CD4-positive, alpha-beta T cell (primary cell): ENCODE measurements at regions of chr17 and their contacts with region 1.

Region 1: DNA sequence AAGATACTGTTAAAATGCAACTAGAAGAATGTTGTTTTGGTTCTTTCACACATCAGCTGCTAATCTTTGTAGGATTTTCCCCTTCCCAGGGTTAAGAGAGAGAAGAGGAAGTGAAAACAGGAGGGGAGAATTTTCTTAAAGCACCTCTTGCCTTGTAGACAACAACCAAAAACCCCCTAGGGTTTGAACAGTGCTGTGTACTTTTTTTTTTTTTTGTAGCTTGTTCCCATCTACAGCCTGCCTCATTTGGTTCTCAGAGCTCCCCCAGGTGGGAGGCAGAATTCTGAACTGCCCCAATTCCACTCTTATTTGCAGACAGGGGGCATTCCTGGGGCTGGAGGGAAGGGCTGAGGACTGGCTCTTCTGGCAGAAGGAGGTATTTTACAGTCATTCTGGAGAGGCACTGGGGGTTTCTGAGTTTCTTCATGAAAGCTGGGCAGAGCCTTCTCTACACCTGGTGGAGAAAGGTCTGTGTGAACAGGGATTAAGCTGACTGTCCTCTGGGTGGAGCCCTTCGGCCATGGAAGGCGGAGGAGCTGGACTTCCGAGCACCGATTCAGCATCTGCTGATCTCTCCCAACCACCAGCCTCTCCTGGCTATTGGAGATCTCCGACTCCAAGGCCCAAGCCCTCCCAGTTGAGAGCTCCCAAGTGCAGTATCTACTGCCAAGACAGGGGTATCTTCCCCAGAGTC is 32.2 kb downstream of the SMARCE1 start:
- DNase-seq: peak in 9 of 14 experiments; percentile 44 to 89 (median 55)
- ATAC-seq: peak; percentile 35
- H3K4me3 ChIP-seq: no peak overlapping the region
- H3K4me3 Mint-ChIP-seq: peak overlapping the region; percentile 75
- H3K27ac ChIP-seq: peak overlapping the region; percentile 96 to 99
- H3K27ac Mint-ChIP-seq: peak overlapping the region; percentile 98
- H3K4me1 ChIP-seq: peaks cover 83% of the 10 kb centered on the region
- H3K4me1 Mint-ChIP-seq: peaks cover 72% of the 10 kb centered on the region
- H3K27me3 ChIP-seq: no peaks in the 10 kb centered on the region
- H3K27me3 Mint-ChIP-seq: no peaks in the 10 kb centered on the region
- CTCF ChIP-seq: peak; percentile 67

Region 2: GRCh38 chr17:40362696-40363110 is 252.7 kb before region 1 on chr17:
- CTCF ChIA-PET with region 1: interaction called, 5 read pairs
- POLR2A ChIA-PET with region 1: no interaction called
- intact Hi-C with region 1: loop called in 1 of 2 experiments (anchors 5 kb)
- DNase-seq: peak; percentile 68 to 87 (median 74)
- ATAC-seq: peak; percentile 82
- H3K4me3 ChIP-seq: peak overlapping the region; percentile 36
- H3K4me3 Mint-ChIP-seq: peak overlapping the region; percentile 14
- H3K27ac ChIP-seq: no peak overlapping the region
- H3K27ac Mint-ChIP-seq: no peak overlapping the region
- H3K4me1 ChIP-seq: peaks cover 23% of the 10 kb centered on the region
- H3K4me1 Mint-ChIP-seq: peaks cover 16% of the 10 kb centered on the region
- H3K27me3 ChIP-seq: peaks cover 0 to 13% of the 10 kb centered on the region in 2 experiments
- H3K27me3 Mint-ChIP-seq: peaks cover 17% of the 10 kb centered on the region
- CTCF ChIP-seq: peak; percentile 56

Region 3: GRCh38 chr17:40443583-40444327 is 171.7 kb before region 1 on chr17:
- CTCF ChIA-PET with region 1: no interaction called
- POLR2A ChIA-PET with region 1: interaction called, 3 read pairs
- intact Hi-C with region 1: loop called in 1 of 2 experiments (anchors 5 kb)
- DNase-seq: peak; percentile 41 to 84 (median 66)
- ATAC-seq: peak; percentile 76
- H3K4me3 ChIP-seq: peak overlapping the region; percentile 62
- H3K4me3 Mint-ChIP-seq: peak overlapping the region; percentile 89
- H3K27ac ChIP-seq: no peak overlapping the region
- H3K27ac Mint-ChIP-seq: peak overlapping the region; percentile 85
- H3K4me1 ChIP-seq: peaks cover 46% of the 10 kb centered on the region
- H3K4me1 Mint-ChIP-seq: peaks cover 37% of the 10 kb centered on the region
- H3K27me3 ChIP-seq: no peaks in the 10 kb centered on the region
- H3K27me3 Mint-ChIP-seq: peaks cover 6% of the 10 kb centered on the region
- CTCF ChIP-seq: peak; percentile 63

Region 4: DNA sequence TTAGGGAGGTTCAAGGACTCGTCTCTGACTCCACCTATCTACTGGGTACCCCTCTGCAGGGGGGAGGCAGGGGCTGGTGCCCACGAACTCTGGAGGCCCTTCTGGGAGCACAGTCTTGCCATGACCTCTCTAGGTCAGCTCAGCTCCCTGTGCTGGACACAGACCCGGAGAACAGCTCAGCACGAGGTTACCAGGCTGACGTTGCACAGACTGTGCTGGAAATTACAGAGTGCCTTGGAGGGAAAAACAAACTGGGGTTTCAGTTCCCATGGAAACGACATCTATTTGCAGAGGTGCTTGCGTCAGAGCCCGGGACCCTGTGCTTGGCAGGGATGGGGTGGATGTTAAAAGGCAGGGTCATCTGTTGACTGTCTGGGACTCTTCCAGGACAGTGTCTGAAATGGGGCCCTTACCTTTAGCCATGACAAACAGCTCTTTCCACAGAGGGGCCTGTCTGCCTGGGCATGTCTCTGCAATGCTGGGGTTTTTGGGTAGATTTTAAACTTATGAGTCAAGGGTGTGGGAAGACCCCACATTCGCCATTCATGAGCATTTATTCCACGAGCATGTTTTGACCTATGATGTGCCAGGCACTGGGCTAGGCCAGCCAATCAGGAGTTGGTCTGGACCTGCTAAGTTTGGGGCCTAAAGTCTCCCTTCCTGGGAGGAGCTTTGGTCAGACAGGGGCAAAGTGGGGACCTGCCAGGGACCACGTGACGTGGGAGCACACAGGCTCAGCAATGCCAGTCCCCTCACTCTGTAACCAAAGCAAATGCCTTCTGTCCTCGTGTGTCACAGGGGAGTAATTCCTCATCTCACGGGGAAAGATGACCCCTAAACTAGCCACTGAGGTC is 72.7 kb before region 1 on chr17:
- CTCF ChIA-PET with region 1: interaction called, 17 read pairs
- POLR2A ChIA-PET with region 1: interaction called, 1,290 read pairs
- intact Hi-C with region 1: loop called in 1 of 2 experiments (anchors 2 kb)
- DNase-seq: peak in 5 of 14 experiments; percentile 32 to 80 (median 45)
- ATAC-seq: no peak
- H3K4me3 ChIP-seq: no peak overlapping the region
- H3K4me3 Mint-ChIP-seq: peak overlapping the region; percentile 72
- H3K27ac ChIP-seq: peak overlapping the region in 1 of 2 donors; percentile 79
- H3K27ac Mint-ChIP-seq: peak overlapping the region; percentile 94
- H3K4me1 ChIP-seq: peaks cover 94% of the 10 kb centered on the region
- H3K4me1 Mint-ChIP-seq: peaks cover 83% of the 10 kb centered on the region
- H3K27me3 ChIP-seq: no peaks in the 10 kb centered on the region
- H3K27me3 Mint-ChIP-seq: no peaks in the 10 kb centered on the region
- CTCF ChIP-seq: no peak

Region 5: DNA sequence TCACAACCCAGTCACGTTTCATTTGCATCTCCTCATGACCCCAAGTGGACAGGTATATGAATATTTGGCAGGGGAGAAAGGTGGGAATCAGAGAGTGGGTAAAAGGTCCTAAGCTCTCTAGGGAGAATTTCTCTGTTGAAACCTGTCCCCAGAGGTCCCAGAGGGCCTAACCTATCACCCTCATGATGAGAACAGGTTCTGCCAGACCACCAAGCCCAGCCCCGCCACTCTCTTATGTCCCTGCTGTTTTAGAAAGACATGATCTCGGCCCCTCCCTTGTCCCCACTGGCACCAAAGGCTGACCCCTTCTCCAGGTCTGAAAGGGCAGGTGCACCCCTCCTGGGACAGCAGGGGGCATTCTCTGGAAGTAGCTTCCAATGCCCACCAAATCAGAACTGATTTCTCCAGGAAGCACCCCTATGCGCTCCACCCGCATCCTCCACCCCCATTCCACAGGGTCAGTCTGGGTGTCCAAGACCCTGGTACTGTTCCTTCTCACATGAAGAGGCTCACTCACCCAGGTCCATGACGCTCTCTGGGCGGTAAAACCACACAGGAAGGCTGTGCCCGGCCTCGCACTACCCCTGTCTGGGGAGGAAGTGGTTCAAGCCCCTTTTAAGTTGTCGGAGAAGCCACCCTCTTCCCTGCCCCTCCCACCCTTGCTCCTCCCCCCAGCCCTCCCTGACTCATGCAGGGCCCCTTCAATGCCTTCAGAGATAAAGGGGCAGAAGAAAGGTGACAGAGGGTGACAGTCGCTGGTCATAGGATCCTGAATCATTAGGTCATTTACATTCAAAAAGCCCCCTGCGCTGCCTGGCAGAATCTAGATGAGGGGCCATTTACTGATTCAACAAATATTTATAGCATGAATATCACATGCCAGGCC is 50.3 kb before region 1 on chr17 and contains the start of gene CCR7:
- CTCF ChIA-PET with region 1: interaction called, 288 read pairs
- POLR2A ChIA-PET with region 1: interaction called, 1,290 read pairs
- intact Hi-C with region 1: loop called (anchors 1 kb)
- DNase-seq: peak; percentile 86 to 94 (median 90)
- ATAC-seq: peak; percentile 45
- H3K4me3 ChIP-seq: peak within 1 kb of the TSS; percentile 97
- H3K4me3 Mint-ChIP-seq: peak within 1 kb of the TSS; percentile 91
- H3K27ac ChIP-seq: peak within 1 kb of the TSS; percentile 92 to 100
- H3K27ac Mint-ChIP-seq: peak within 1 kb of the TSS; percentile 92
- H3K4me1 ChIP-seq: peaks cover 82% of the 10 kb centered on the region
- H3K4me1 Mint-ChIP-seq: peaks cover 80% of the 10 kb centered on the region
- H3K27me3 ChIP-seq: no peaks in the 10 kb centered on the region
- H3K27me3 Mint-ChIP-seq: no peaks in the 10 kb centered on the region
- CTCF ChIP-seq: peak; percentile 25
- total RNA-seq, gene CCR7: 170 to 180 TPM

Region 6: DNA sequence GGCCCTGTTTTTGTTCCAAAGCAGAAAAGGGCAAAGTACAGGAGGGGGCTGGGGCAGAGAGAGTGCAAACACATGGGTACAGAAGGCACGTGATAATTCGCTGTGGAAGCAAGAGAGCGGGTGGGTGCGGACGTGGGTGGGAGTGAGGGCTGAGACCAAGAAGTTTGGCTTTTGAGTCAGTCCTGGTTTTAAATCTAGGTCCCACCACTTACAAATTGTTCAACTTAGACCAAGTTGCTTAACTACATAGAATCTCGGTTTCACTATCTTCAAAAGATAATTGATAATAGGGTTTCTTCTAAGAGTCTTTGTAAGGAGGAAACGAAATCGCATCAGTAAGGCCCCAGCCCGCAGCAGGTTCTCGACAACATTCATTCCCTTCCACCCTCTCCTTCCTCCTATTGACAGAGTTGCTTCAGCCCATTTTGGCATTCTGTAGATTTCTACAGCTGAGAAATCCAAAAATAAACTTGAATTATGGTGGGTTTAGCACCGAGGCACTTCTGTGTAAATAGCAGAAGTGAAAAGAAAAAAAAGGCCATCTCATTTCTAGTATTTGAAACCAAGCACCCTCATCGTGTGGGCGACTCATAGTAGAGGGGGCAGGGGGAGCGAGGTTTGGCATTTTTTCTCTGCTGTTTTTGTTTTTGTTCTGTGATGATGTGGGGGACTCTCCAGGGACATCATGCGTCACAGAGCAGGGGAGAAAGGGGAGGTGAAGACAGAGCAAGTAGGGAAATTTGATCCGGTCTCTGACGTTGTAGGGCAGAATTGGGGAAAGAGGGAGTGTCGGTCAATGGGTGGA is 16.6 kb before region 1 on chr17:
- CTCF ChIA-PET with region 1: interaction called, 24 read pairs
- POLR2A ChIA-PET with region 1: interaction called, 145 read pairs
- intact Hi-C with region 1: loop called in 1 of 2 experiments (anchors 1 kb)
- DNase-seq: peak in 13 of 14 experiments; percentile 38 to 94 (median 65)
- ATAC-seq: peak; percentile 47
- H3K4me3 ChIP-seq: peak overlapping the region; percentile 24
- H3K4me3 Mint-ChIP-seq: peak overlapping the region; percentile 71
- H3K27ac ChIP-seq: peak overlapping the region; percentile 95 to 99
- H3K27ac Mint-ChIP-seq: peak overlapping the region; percentile 98
- H3K4me1 ChIP-seq: peaks cover 78% of the 10 kb centered on the region
- H3K4me1 Mint-ChIP-seq: peaks cover 95% of the 10 kb centered on the region
- H3K27me3 ChIP-seq: no peaks in the 10 kb centered on the region
- H3K27me3 Mint-ChIP-seq: no peaks in the 10 kb centered on the region
- CTCF ChIP-seq: no peak